Activated T-helper 1 cell treated with anti-CD3 and anti-CD28 coated beads, Interleukin-12 subunit alpha, Interleukin-12 subunit beta, Interleukin-2, Interleukin-4 antibody, amounts not matched to agents 30 ng/mL and 10 ng/mL and 1 ng/mL, durations not matched to agents 14 hours and 24 hours and 36 hours (primary cell): ENCODE measurements at regions of chr1 and their contacts with region 1.

Region 1: GRCh38 chr1:27603681-27604578 is at the start of gene AHDC1:
- DNase-seq: peak; percentile 89
- H3K4me3 Mint-ChIP-seq: peak within 1 kb of the TSS; percentile 89
- H3K27ac Mint-ChIP-seq: peak within 1 kb of the TSS; percentile 89
- H3K4me1 Mint-ChIP-seq: peaks cover 38% of the 10 kb centered on the region
- H3K27me3 Mint-ChIP-seq: peaks cover 2% of the 10 kb centered on the region
- total RNA-seq, gene AHDC1: 33.7 and 33.9 TPM in 2 replicates

Region 2: GRCh38 chr1:26723013-26723991 is 880.6 kb before region 1 on chr1:
- intact Hi-C with region 1: no loop called
- DNase-seq: peak; percentile 25
- H3K4me3 Mint-ChIP-seq: peak overlapping the region; percentile 55
- H3K27ac Mint-ChIP-seq: peak overlapping the region; percentile 35
- H3K4me1 Mint-ChIP-seq: peaks cover 82% of the 10 kb centered on the region
- H3K27me3 Mint-ChIP-seq: no peaks in the 10 kb centered on the region

Region 3: DNA sequence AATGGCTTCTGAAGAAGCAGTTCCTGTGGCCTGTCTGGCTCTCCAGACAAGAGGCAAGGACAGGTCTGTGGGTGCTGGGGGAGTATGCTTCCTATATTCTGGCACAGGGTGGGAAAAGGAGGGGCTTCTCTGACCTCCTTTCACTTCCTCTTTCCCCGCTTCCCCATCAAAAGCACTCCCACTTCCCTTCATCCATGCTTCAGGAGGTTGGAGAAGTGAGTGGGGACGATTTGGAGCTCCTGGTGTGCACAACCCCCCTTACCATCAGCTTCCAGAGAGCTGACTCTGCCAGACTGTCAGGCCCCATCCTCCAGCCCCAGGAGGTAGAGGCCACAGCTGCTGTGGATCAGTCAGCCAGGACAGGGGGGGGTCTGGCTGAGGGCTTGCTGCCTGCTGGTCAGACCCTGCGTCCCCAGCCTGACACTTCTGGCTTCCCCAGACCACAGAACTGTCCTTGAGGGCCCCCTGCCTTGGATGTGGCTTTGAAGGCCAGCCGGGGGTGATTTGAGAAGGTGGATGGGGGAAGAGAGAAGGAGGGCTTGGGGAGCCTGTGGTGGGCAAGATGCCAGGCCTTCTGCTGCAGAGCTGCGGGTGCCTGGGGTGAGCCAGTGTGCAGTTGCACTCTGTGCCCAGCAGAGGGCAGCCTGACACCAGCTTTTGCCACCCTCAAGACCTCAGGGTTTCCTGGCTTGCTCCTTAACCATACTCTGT is 303.4 kb before region 1 on chr1:
- intact Hi-C with region 1: loop called (anchors 2 kb)
- DNase-seq: peak; percentile 61
- H3K4me3 Mint-ChIP-seq: no peak overlapping the region
- H3K27ac Mint-ChIP-seq: no peak overlapping the region
- H3K4me1 Mint-ChIP-seq: peaks cover 4% of the 10 kb centered on the region
- H3K27me3 Mint-ChIP-seq: no peaks in the 10 kb centered on the region

Region 4: GRCh38 chr1:27403065-27403726 is 200.7 kb before region 1 on chr1:
- intact Hi-C with region 1: loop called (anchors 1 kb)
- DNase-seq: no peak
- H3K4me3 Mint-ChIP-seq: no peak overlapping the region
- H3K27ac Mint-ChIP-seq: no peak overlapping the region
- H3K4me1 Mint-ChIP-seq: peaks cover 6% of the 10 kb centered on the region
- H3K27me3 Mint-ChIP-seq: no peaks in the 10 kb centered on the region

Region 5: GRCh38 chr1:27522432-27523351 is 81.2 kb before region 1 on chr1:
- intact Hi-C with region 1: loop called (anchors 1 kb)
- DNase-seq: peak; percentile 59
- H3K4me3 Mint-ChIP-seq: peak overlapping the region; percentile 90
- H3K27ac Mint-ChIP-seq: peak overlapping the region; percentile 97
- H3K4me1 Mint-ChIP-seq: peaks cover 79% of the 10 kb centered on the region
- H3K27me3 Mint-ChIP-seq: no peaks in the 10 kb centered on the region

Region 6: GRCh38 chr1:27662707-27663393 is 58.9 kb after region 1 on chr1:
- intact Hi-C with region 1: loop called (anchors 1 kb)
- DNase-seq: peak; percentile 83
- H3K4me3 Mint-ChIP-seq: peak overlapping the region; percentile 70
- H3K27ac Mint-ChIP-seq: peak overlapping the region; percentile 97
- H3K4me1 Mint-ChIP-seq: peaks cover 59% of the 10 kb centered on the region
- H3K27me3 Mint-ChIP-seq: no peaks in the 10 kb centered on the region